Right ventricle myocardium inferior (tissue), 1 donor: ENCODE measurements at regions of chr9 and their contacts with region 1.

Region 1: DNA sequence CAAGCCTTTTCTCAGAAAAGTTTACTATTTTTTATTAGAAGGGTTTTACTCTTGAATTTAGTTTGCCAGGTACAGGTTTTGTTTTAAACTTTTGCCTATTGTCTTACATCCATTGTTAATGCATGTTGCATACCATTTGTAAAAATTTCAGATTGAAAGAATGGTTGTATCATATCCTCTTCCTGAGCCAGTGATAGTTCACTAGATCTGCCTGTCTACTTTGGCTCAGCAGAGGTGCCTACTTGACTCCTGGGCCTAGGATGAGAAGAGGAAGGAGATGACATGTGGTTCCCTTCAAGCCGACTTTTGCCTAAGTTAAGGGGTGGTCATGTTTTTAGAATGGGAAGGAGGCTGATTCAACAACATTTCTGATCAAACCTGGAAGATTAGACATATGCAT is 232.9 kb downstream of the TRPM3 start:
- DNase-seq: no peak
- ATAC-seq: no peak

Region 2: DNA sequence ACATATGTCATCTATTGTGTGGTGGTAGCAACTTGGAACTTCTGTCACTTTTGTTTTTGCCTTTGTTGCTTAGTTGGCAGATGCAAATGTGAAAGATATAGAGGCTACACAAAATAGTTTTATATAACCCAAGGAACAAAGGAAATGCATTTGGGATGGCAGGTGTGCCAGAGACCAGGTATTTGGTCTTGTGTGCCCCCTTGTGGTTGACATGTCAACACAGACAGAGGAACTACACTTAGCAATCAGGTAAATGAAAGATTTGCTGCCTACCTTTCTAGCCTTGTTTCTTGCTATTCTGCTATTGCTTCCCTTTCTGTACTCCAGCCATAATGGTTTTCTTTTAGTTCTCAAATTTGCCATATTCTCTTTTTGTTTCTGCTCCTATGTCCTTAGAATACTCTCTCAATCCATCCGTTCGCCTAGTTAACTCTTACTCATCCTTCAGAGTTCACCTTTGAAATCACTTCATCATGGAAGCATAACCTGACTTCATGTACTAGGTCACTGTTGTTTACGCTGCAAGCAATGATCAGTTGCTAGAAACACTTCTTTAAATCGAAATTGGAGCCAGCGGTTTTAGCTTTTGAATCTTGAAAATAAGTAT is 113.4 kb after region 1 on chr9:
- intact Hi-C with region 1: loop called (anchors 5 kb)
- DNase-seq: no peak
- ATAC-seq: no peak